Aorta (tissue), 5 donors: ENCODE measurements at regions of chr22 and their contacts with region 1.

Region 1: GRCh38 chr22:23219822-23220484 is 39.6 kb downstream of the BCR start:
- DNase-seq: peak; percentile 75 to 83
- ATAC-seq: peak; percentile 23
- H3K4me3 ChIP-seq: no peak overlapping the region
- H3K27ac ChIP-seq: no peak overlapping the region
- H3K4me1 ChIP-seq: peaks cover 4 to 8% of the 10 kb centered on the region in 2 donors
- H3K27me3 ChIP-seq: no peaks in the 10 kb centered on the region

Region 2: DNA sequence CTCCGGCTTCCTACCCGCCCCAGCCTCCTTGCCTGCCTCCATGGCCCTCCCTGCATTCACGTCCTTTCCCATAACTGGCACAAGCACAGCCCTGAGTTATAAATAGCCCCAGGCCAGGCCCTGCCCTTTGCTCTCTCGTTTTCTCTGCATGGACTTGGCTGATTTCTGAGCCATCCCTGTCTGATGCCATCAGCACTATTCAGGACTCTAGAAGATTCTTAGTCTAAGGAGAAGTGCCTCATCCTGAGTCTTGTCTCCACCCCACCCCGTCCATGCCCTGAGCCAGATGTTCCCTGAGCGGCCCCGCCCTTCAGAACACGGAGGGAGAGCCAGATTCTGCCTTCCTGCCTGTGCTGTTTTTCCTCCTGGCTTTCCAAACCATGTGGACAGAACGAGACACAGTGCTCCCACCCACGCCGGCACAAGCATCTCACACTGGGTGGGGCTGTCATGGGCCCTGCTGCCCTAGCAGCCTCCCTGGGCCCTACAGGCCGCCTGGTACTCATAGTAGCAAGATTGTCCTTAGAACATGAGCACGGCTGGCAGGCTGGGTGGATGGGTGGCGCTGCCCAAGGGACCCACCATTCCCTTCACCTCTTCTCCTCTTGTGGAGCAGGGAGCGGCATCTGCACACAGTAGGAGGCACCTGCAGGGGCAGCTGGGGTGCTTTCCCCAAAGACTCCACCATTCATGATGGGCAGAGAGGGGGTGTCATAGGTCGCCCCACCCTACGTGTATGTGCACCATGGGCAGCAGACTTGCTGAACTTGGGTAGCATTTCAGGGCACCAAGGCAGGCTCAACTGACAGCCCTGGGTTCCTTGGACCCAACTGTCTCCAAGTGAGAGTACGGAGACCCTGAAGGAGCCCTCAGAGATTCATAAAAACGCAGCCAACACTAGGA is 37.3 kb after region 1 on chr22:
- intact Hi-C with region 1: loop called in 1 of 2 experiments (anchors 5 kb)
- DNase-seq: peak; percentile 88 to 92
- ATAC-seq: peak; percentile 86
- H3K4me3 ChIP-seq: no peak overlapping the region
- H3K27ac ChIP-seq: peak overlapping the region; percentile 68 to 85
- H3K4me1 ChIP-seq: no peaks in the 10 kb centered on the region
- H3K27me3 ChIP-seq: no peaks in the 10 kb centered on the region